ENCODE measurements at regions of chr18 and their contacts with region 1.

Region 1: DNA sequence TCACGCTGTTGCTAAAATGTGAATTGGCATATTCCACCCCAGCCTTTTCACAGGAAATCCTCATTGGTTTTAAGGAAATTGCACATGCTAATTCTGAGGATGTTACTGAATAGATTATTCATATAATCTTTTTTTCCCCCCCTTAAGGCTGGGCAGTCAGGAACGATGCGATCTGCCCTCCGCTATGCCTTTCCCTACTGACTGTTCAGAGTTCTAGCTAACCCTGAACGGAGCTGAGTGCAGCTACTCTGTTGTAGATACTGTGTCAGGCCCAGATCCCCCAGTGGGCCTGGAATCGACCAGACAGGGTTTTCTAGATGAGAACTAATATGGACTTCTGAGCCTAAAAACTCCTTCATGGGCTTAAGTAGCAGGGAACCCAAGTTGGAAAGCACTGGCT is 192.2 kb downstream of the TCF4 start:
- DNase-seq: no peak
- H3K4me3 ChIP-seq: no peak overlapping the region
- H3K27me3 ChIP-seq: no peaks in the 10 kb centered on the region
- CTCF ChIP-seq: no peak

Region 2: GRCh38 chr18:55384551-55385275 is 11.1 kb before region 1 on chr18:
- CTCF ChIA-PET with region 1: interaction called, 18 read pairs
- POLR2A ChIA-PET with region 1: no interaction called
- DNase-seq: no peak
- H3K4me3 ChIP-seq: no peak overlapping the region
- H3K27me3 ChIP-seq: no peaks in the 10 kb centered on the region
- CTCF ChIP-seq: peak; percentile 79

Measured in BJ (cell line).